Upper lobe of right lung (tissue), 1 donor: ENCODE measurements at regions of chr3 and their contacts with region 1.

Region 1: GRCh38 chr3:144358191-144358590 is 386.6 kb downstream of the DIPK2A start:
- DNase-seq: no peak
- ATAC-seq: no peak
- H3K4me3 ChIP-seq: no peak overlapping the region
- H3K27ac ChIP-seq: no peak overlapping the region
- H3K4me1 ChIP-seq: no peaks in the 10 kb centered on the region
- H3K27me3 ChIP-seq: no peaks in the 10 kb centered on the region
- CTCF ChIP-seq: no peak

Region 2: GRCh38 chr3:144142151-144142840 is 215.9 kb before region 1 on chr3:
- intact Hi-C with region 1: no loop called
- DNase-seq: no peak
- ATAC-seq: no peak
- H3K4me3 ChIP-seq: no peak overlapping the region
- H3K27ac ChIP-seq: no peak overlapping the region
- H3K4me1 ChIP-seq: no peaks in the 10 kb centered on the region
- H3K27me3 ChIP-seq: no peaks in the 10 kb centered on the region
- CTCF ChIP-seq: no peak

Region 3: DNA sequence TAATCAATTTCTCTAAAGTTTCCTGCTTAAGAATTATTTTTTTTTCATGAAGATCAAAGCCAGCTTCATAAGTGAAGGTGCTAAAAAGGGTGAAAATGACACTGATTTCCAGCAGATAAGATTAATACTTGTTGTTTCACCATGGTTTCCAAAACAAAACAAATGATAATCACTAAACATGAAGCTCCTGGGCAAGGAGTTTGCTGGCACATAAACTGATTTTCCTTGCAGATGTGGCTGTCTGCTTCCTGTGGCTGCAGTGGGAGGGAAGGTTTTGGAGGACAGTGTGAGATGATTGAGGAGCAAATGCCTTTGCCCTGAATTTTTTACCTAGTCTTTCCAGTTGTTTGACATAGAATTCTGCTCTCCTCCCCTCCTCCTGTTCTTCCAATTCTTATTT is 157.7 kb before region 1 on chr3:
- intact Hi-C with region 1: loop called (anchors 5 kb)
- DNase-seq: no peak
- ATAC-seq: no peak
- H3K4me3 ChIP-seq: no peak overlapping the region
- H3K27ac ChIP-seq: no peak overlapping the region
- H3K4me1 ChIP-seq: no peaks in the 10 kb centered on the region
- H3K27me3 ChIP-seq: no peaks in the 10 kb centered on the region
- CTCF ChIP-seq: no peak